OCI-LY7 (cell line): ENCODE measurements at regions of chr9 and their contacts with region 1.

Region 1: DNA sequence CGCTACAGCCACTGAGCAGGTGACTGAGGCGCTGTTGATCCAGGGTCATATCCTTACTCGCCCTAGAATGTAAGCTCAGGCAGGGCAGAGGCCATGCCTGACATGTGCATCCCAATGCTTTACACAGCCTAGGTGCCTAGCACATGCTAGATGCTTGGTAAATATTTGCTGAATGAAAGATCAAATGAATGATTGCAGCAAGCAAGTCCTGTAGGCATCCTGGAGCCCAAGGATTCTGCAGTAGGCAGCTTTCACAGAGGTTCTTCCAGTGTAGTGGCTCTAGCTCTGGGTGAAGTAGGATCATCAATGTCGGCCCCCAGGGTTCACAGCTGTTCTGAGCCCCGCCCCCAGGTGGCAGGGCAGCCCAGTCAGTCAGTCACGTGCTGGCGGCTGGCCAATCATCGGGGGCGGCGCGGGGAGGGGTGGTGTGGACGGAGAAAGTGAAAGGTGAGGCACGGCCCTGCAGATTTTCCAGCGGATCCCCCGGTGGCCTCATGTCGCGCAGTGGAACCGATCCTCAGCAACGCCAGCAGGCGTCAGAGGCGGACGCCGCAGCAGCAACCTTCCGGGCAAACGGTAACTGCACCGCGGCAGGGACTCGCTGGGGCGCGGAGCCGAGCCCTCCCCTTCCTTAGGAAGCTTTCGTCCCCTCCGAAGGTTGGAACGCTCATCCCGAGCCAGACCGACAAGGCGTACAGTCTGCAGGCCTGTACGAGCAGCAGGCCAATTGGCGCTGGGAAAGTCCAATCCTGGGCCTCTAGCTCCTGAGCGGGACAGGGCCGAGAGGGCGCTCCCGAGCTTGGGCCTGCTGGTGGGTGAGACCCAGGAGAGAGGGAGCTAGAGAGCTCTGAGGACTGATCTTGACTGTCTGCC is at the start of gene GALT:
- DNase-seq: peak; percentile 93
- H3K4me3 ChIP-seq: peak within 1 kb of the TSS; percentile 80
- H3K27ac ChIP-seq: peak within 1 kb of the TSS; percentile 65
- H3K4me1 ChIP-seq: peaks cover 21% of the 10 kb centered on the region
- CTCF ChIP-seq: peak; percentile 80
- total RNA-seq, gene GALT: 78.2 and 90.9 TPM in 2 replicates

Region 2: DNA sequence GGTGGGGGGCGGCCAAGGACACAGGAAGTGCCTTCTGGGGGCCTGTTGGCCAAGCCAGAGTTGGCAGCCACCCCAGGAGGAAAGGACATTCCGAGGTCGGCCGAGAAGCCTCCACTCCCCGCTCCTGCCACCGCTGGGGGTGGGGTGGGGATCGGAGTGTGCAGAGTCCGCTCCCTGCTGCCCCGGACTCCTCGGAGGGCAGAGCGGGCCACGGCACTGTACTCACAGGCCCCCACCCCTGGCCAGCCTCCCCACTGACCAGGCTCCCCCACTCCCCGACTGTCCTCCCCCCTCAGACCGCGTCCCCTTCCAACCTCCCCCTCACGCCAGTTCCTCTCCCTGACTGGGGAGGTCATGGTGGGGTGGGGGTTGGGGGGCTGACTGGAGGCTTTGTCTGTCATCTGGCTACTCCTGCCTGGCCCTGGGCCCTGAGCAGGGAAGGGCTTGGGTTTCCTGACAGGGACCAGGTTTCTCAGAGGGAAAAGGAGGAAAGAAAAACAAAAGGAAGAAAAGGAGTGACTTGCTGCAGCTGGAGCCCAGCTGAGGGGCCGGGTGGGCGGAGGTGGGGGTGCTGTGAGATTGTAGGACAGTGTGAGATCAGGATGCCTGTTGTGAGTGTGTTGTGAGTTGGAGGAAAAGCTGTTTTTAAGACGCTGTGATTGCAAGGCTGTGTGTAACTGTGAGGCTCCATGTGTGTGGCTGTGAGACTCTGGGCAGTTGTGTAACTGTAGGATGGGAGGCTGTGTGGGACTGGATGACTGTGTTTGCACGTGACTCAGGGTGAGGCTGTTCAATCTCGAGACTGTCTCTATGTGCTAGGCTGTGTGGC is 86.6 kb before region 1 on chr9:
- CTCF ChIA-PET with region 1: no interaction called
- POLR2A ChIA-PET with region 1: no interaction called
- intact Hi-C with region 1: no loop called
- DNase-seq: no peak
- H3K4me3 ChIP-seq: no peak overlapping the region
- H3K27ac ChIP-seq: no peak overlapping the region
- H3K4me1 ChIP-seq: no peaks in the 10 kb centered on the region
- CTCF ChIP-seq: no peak

Region 3: GRCh38 chr9:34600908-34601307 is 45.5 kb before region 1 on chr9:
- CTCF ChIA-PET with region 1: no interaction called
- POLR2A ChIA-PET with region 1: no interaction called
- intact Hi-C with region 1: no loop called
- DNase-seq: no peak
- H3K4me3 ChIP-seq: no peak overlapping the region
- H3K27ac ChIP-seq: no peak overlapping the region
- H3K4me1 ChIP-seq: no peaks in the 10 kb centered on the region
- CTCF ChIP-seq: no peak

Region 4: DNA sequence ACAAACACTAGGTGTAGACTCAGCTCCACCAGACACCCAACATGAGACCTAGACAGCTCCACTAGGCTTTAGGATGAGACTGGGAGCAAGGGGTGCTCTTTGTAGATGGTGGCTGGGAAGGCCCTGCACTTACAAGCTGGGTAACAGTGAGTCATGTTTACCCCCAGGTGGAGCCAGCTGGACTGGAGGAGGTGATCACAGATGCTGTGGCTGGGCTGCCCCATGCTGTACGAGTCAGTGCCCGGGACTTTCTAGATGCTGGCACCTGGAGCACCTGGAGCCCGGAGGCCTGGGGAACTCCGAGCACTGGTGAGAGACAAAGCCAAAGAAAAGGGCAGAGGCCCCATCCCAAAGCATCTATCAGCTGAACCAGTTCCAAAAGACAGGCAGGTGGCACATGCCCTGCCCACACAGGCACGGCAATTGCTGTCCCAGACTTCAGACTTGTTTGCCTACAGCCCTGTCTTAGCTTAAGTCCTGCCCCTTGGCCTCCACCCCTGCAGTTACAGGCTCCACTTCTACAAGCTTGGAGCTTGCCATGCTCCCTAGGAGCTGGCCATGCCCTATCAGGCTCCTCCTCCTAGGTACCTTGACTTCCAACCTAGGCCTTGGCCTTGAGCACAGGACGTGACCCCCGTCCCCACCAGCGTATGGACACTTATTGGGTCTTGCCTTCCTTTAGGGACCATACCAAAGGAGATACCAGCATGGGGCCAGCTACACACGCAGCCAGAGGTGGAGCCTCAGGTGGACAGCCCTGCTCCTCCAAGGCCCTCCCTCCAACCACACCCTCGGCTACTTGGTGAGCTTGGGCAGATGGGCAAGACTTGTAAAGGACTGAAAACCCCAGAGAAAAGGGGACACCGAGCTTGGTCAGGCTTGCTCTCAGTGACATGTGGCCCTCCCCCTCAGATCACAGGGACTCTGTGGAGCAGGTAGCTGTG is 13.4 kb after region 1 on chr9:
- CTCF ChIA-PET with region 1: interaction called, 13 read pairs
- POLR2A ChIA-PET with region 1: interaction called, 9 read pairs
- intact Hi-C with region 1: loop called (anchors 1 kb)
- DNase-seq: peak; percentile 10
- H3K4me3 ChIP-seq: no peak overlapping the region
- H3K27ac ChIP-seq: no peak overlapping the region
- H3K4me1 ChIP-seq: peaks cover 5% of the 10 kb centered on the region
- CTCF ChIP-seq: no peak

Region 5: GRCh38 chr9:34665381-34666250 is 19.2 kb after region 1 on chr9:
- CTCF ChIA-PET with region 1: interaction called, 13 read pairs
- POLR2A ChIA-PET with region 1: interaction called, 9 read pairs
- intact Hi-C with region 1: loop called (anchors 1 kb)
- DNase-seq: peak; percentile 95
- H3K4me3 ChIP-seq: peak overlapping the region; percentile 96
- H3K27ac ChIP-seq: peak overlapping the region; percentile 82
- H3K4me1 ChIP-seq: peaks cover 13% of the 10 kb centered on the region
- CTCF ChIP-seq: no peak